Mammary epithelial cell (primary cell): ENCODE measurements at regions of chr5 and their contacts with region 1.

Region 1: GRCh38 chr5:3509289-3509688 is 86.3 kb upstream of the IRX1 start:
- DNase-seq: no peak
- H3K4me3 ChIP-seq: no peak overlapping the region
- H3K27ac ChIP-seq: no peak overlapping the region
- H3K4me1 ChIP-seq: no peaks in the 10 kb centered on the region
- H3K27me3 ChIP-seq: no peaks in the 10 kb centered on the region
- CTCF ChIP-seq: peak; percentile 44 to 46

Region 2: GRCh38 chr5:3913279-3913678 is 404.0 kb after region 1 on chr5:
- CTCF ChIA-PET with region 1: interaction called, 13 read pairs
- dilution Hi-C with region 1: no loop called
- in situ Hi-C with region 1: no loop called
- intact Hi-C with region 1: no loop called
- DNase-seq: no peak
- H3K4me3 ChIP-seq: no peak overlapping the region
- H3K27ac ChIP-seq: no peak overlapping the region
- H3K4me1 ChIP-seq: peaks cover 9% of the 10 kb centered on the region
- H3K27me3 ChIP-seq: no peaks in the 10 kb centered on the region
- CTCF ChIP-seq: no peak